PC-3 (cell line): ENCODE measurements at regions of chr7 and their contacts with region 1.

Region 1: DNA sequence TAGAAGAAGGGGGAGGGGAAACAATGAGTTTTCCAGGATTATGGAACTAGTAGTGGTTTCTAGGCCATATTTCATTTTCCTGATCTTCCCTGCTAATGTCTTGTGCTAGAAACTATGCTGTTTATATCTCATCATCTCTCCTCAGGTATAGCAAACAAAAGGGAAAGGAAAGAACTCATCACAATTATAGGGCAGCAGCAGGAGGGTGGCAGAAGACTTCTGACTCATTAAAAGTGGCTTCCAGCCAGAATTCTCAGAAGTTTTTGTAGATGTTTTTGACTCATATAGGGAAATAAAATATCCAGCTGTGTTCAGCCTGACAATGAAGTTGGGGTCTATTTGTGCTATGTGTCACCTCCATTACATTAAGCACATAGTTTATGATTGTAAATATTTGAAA is 6.5 kb downstream of the AHR start:
- DNase-seq: peak; percentile 97
- ATAC-seq: peak; percentile 84
- H3K4me3 ChIP-seq: peak overlapping the region; percentile 55
- H3K27ac ChIP-seq: peak overlapping the region; percentile 73
- H3K4me1 ChIP-seq: peaks cover 50% of the 10 kb centered on the region
- H3K27me3 ChIP-seq: no peaks in the 10 kb centered on the region
- CTCF ChIP-seq: no peak

Region 2: DNA sequence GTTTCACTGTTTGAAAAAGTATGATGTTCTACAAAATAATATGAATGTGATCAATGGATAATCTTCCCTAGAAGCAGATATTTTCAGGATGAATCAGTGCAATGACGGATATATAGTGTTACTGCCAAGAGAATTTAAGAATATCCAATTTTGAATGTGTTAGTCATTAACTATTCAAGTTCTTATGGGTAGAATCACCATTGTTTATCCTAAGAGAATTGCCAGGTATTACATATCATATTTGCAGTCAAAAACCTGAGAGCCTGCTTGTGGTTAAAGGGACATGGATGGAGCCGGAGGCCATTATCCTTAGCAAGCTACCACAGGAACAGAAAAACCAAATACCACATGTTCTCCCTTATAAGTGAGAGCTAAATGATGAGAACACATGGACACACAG is 20.4 kb after region 1 on chr7:
- CTCF ChIA-PET with region 1: no interaction called
- POLR2A ChIA-PET with region 1: no interaction called
- intact Hi-C with region 1: loop called (anchors 1 kb)
- DNase-seq: peak; percentile 89
- ATAC-seq: peak; percentile 76
- H3K4me3 ChIP-seq: no peak overlapping the region
- H3K27ac ChIP-seq: peak overlapping the region; percentile 67
- H3K4me1 ChIP-seq: peaks cover 23% of the 10 kb centered on the region
- H3K27me3 ChIP-seq: no peaks in the 10 kb centered on the region
- CTCF ChIP-seq: no peak

Region 3: GRCh38 chr7:17444673-17445072 is 139.7 kb after region 1 on chr7:
- CTCF ChIA-PET with region 1: no interaction called
- POLR2A ChIA-PET with region 1: no interaction called
- intact Hi-C with region 1: loop called (anchors 5 kb)
- DNase-seq: peak; percentile 70
- ATAC-seq: peak; percentile 70
- H3K4me3 ChIP-seq: no peak overlapping the region
- H3K27ac ChIP-seq: no peak overlapping the region
- H3K4me1 ChIP-seq: peaks cover 21% of the 10 kb centered on the region
- H3K27me3 ChIP-seq: no peaks in the 10 kb centered on the region
- CTCF ChIP-seq: no peak

Region 4: DNA sequence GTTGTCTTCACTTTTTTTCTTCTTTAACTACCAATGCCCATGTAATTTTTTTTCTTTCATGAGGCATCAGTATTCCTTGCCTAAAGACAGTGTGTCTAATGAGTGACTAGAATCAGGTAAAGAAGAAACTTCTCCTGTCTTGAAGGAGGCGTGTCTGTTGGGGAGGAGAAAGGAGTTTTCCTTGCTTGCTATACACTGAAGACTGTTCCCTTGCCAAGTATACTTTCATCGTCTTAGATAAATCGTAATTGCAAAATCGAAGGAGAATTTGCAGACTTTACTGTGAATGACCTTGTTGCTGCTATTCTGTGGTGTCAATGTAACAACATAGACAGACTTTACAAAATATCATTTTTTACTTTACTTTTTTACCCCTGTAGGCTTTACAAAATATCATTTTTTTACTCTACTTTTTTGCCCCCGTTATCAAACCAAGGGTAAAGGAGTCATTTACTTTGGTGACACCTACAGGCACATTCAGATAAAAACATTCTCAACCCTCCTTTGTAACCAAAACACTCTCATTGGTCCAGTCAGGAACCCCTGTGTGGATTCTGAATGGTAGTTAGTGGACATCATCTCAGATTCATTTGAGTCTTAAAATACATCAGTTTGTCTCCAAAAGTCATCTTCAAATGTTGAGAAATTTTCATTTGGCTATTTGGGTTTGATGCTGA is 226.0 kb after region 1 on chr7:
- CTCF ChIA-PET with region 1: interaction called, 5 read pairs
- POLR2A ChIA-PET with region 1: no interaction called
- intact Hi-C with region 1: loop called (anchors 1 kb)
- DNase-seq: peak; percentile 36
- ATAC-seq: no peak
- H3K4me3 ChIP-seq: no peak overlapping the region
- H3K27ac ChIP-seq: no peak overlapping the region
- H3K4me1 ChIP-seq: peaks cover 36% of the 10 kb centered on the region
- H3K27me3 ChIP-seq: no peaks in the 10 kb centered on the region
- CTCF ChIP-seq: peak; percentile 70

Region 5: DNA sequence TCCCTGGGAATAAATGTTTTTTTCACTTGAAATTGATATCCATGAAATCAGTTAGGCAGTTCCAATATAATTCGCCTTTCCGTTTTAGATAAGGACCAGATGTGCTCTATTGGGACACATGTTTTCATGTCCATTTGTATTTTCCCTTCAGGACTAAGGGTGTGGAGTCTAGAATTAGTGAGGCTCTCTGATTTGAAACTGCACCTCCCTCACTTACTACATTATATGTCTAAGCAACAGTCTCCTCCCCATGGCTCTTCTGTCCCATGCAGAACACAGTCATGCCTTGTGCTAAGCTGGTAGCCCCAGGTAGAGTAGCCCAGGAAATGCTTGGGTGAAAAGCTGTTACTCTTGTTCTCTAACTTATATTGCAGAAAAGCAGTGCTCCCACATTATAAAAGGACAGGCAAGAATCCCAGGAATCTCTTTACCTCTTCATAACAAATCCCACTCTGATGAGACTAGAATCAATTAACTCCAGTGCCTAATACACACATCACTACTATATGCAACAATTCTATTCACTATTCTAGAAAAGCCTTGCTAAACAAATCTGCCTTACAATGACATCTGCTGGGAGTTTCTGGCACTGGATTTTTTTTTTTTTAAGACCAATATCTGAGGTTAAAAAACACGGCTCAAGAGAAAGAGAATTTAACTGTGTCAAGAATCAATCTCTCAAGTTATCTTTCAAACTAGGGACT is 341.5 kb after region 1 on chr7:
- CTCF ChIA-PET with region 1: interaction called, 3 read pairs
- POLR2A ChIA-PET with region 1: interaction called, 11 read pairs
- intact Hi-C with region 1: loop called (anchors 1 kb)
- DNase-seq: peak; percentile 54
- ATAC-seq: peak; percentile 87
- H3K4me3 ChIP-seq: no peak overlapping the region
- H3K27ac ChIP-seq: no peak overlapping the region
- H3K4me1 ChIP-seq: peaks cover 8% of the 10 kb centered on the region
- H3K27me3 ChIP-seq: no peaks in the 10 kb centered on the region
- CTCF ChIP-seq: peak; percentile 77

Region 6: DNA sequence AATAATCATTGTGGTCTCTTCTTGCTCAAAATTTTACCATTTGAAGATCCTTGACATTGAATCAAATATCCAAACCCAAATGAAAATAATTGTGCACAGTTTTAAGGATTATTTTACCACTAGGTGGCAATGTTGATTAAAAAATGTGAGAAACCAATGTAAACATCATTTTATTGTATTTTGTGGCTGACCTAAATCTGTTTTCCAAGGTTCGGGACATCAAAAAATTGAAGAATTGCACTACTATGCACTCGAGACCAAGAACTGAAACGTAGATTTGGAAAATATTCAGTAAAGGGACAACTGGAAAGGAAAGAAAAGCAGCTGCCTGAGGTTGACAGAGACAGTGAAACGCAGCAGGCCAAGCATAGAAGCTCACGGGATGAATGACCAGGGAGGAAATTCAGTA is 376.0 kb after region 1 on chr7:
- CTCF ChIA-PET with region 1: interaction called, 3 read pairs
- POLR2A ChIA-PET with region 1: no interaction called
- intact Hi-C with region 1: loop called (anchors 1 kb)
- DNase-seq: peak; percentile 79
- ATAC-seq: peak; percentile 29
- H3K4me3 ChIP-seq: peak overlapping the region; percentile 47; the same call in 1 of the 2 replicates
- H3K27ac ChIP-seq: peak overlapping the region; percentile 72
- H3K4me1 ChIP-seq: peaks cover 49% of the 10 kb centered on the region
- H3K27me3 ChIP-seq: no peaks in the 10 kb centered on the region
- CTCF ChIP-seq: peak; percentile 79

Region 7: DNA sequence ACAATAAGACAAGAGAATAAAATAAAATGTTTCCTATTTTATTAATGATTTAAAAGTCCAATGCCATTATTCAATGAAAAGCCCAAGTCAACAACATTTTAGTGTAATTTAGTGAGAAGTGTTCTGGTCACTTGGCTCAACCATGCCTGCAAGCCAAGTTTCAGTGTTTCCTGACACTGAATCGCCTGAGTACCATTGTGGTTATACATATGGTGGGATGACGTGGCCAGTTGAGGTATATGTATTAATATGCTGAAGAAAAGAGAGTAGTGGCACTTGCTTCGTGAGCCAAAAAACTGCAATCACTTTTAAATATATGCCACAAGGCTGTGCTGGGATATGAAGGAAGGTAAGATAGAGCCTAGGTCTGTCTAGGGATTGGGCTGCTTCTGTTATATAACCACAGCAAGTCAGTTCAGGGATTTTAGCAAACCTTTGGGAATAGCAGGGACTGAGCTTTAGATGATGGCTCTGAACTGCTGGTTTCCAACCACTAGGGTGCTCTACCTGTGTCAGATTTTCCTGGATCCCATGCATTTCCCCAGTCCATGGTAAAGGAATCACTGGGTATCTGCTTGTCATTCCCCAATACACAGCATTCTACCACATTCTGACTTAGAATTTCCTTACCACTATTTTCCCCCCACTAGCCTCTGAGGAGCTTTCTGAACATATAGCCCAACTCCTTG is 936.8 kb after region 1 on chr7:
- CTCF ChIA-PET with region 1: no interaction called
- POLR2A ChIA-PET with region 1: no interaction called
- intact Hi-C with region 1: no loop called
- DNase-seq: peak; percentile 5
- ATAC-seq: peak; percentile 43; the same call in 1 of the 2 replicates
- H3K4me3 ChIP-seq: no peak overlapping the region
- H3K27ac ChIP-seq: no peak overlapping the region
- H3K4me1 ChIP-seq: no peaks in the 10 kb centered on the region
- H3K27me3 ChIP-seq: no peaks in the 10 kb centered on the region
- CTCF ChIP-seq: peak; percentile 39